MCF 10A (cell line): ENCODE measurements at regions of chr11 and their contacts with region 1.

Region 1: GRCh38 chr11:13261591-13262061 is 16.0 kb upstream of the BMAL1 start:
- DNase-seq: peak; percentile 94
- H3K4me3 Mint-ChIP-seq: peak overlapping the region; percentile 62
- H3K27ac Mint-ChIP-seq: peak overlapping the region; percentile 99
- H3K4me1 Mint-ChIP-seq: peaks cover 57% of the 10 kb centered on the region
- H3K27me3 Mint-ChIP-seq: no peaks in the 10 kb centered on the region
- CTCF ChIP-seq: no peak

Region 2: DNA sequence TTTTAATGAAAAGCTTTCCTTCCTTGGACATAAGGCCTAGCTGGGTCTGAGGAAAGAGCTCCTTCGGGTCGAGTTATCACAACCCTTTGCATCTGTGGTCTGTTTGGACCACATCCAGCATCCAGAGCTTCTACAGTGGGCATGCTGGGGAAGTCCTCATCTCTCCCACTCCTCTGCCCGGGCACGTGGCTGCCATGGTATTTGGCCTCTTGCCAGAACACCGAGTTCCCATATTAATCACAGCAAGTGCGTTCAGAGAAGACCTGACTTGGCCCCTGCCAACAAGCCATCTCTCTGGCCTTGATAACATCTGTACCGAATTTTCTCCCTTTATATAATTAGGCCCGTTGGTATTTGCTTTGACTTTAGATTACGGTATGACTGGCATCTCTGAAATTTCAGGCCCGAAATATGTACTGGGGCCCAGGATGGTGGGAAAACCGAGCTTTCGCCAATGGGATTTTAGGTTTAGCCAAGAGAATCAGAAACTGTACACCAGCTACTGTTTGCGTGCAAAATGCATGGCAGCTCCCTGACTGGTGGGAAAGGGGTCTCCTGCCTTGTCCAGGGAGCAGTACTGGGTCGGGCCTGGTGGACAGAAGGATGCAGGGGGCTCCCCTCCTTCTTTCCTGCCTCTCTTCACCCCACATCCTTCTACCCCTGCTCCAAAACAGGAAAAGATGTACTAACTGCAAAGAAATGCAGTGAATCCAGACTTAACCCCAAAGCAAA is 1061.2 kb before region 1 on chr11:
- CTCF ChIA-PET with region 1: no interaction called
- POLR2A ChIA-PET with region 1: no interaction called
- intact Hi-C with region 1: loop called (anchors 10 kb)
- DNase-seq: peak; percentile 65
- H3K4me3 Mint-ChIP-seq: no peak overlapping the region
- H3K27ac Mint-ChIP-seq: peak overlapping the region; percentile 72
- H3K4me1 Mint-ChIP-seq: peaks cover 14% of the 10 kb centered on the region
- H3K27me3 Mint-ChIP-seq: no peaks in the 10 kb centered on the region
- CTCF ChIP-seq: no peak

Region 3: DNA sequence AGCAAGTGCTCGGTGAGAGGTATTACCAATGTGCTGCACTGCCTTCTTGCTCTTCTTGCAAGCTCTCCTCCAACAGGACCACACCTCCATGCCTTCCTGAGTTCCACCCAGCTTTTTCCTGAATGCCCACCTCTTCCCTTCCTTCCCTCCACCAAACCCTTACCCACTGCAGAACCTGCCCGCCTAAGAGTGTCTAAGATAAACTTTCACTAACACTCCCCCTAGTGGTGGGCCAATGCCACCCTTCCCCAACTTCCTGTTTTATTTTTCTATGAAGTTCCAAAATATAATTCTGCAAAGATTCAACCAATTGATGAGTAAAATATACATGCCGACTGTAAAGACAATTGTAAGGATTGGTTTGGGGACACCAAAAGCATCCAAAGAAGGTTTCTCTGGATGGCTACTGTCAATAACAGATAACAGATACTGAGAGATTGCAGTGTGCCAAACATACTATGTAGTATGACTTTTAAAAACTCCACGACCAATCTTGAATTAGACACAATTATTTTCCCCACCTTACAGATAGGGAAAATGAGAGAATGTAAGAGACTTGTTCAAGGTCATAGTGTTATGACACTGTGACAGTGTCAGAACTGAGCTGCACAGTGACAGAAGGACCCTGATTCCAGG is 22.6 kb before region 1 on chr11:
- CTCF ChIA-PET with region 1: interaction called, 9 read pairs
- POLR2A ChIA-PET with region 1: interaction called, 17 read pairs
- intact Hi-C with region 1: no loop called
- DNase-seq: peak; percentile 72
- H3K4me3 Mint-ChIP-seq: no peak overlapping the region
- H3K27ac Mint-ChIP-seq: no peak overlapping the region
- H3K4me1 Mint-ChIP-seq: peaks cover 6% of the 10 kb centered on the region
- H3K27me3 Mint-ChIP-seq: no peaks in the 10 kb centered on the region
- CTCF ChIP-seq: peak; percentile 68

Region 4: DNA sequence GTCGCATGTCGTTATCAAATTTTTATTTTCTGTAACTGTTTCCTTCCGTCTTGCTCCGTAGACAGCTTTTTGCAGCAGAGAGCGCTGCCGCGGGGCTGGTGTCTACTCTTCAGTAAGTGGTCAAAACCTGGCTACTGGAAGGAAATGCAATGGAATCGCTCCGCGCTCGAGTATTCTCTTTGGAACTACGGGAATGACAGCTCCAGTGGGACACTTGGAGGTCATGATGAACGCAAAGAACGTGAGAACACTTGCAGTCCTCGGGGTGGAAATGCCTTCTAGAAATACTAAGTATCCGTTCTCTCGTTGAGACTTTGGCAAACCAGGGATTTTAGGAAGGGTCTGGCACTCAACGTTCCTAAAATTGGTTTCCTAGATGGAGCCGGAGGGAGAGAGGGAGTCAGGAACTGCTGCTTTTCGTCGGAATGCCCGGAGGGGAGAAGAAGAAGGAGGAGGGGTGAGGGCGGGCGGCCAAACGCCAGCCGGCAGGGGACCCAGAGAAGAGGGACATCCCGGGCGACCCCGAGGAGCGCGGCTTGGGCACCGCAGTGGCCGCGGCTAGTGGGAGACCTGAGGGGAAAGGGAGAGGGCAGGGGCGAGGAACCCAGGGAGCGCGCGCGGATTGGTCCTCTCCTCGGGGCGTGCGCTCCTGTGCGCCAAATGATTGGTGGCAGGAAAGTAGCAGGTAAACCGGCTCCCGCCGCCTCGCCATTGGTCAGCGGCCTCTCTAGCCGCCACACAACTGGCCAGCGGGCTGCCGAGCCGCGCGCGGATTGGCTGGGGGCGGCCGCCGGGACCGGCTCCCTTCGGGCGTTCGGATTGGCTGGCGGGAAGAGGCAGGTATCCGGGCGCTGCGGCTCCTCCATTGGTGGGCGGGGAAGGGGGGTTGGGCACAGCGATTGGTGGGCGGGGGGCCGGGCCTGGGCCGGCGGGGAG is 15.5 kb after region 1 on chr11:
- CTCF ChIA-PET with region 1: interaction called, 9 read pairs
- POLR2A ChIA-PET with region 1: interaction called, 134 read pairs
- intact Hi-C with region 1: loop called (anchors 1 kb)
- DNase-seq: peak; percentile 98
- H3K4me3 Mint-ChIP-seq: peak overlapping the region; percentile 91
- H3K27ac Mint-ChIP-seq: no peak overlapping the region
- H3K4me1 Mint-ChIP-seq: peaks cover 31% of the 10 kb centered on the region
- H3K27me3 Mint-ChIP-seq: no peaks in the 10 kb centered on the region
- CTCF ChIP-seq: no peak

Region 5: GRCh38 chr11:13335319-13335718 is 73.7 kb after region 1 on chr11:
- CTCF ChIA-PET with region 1: interaction called, 242 read pairs
- POLR2A ChIA-PET with region 1: interaction called, 204 read pairs
- intact Hi-C with region 1: loop called (anchors 2 kb)
- DNase-seq: peak; percentile 88
- H3K4me3 Mint-ChIP-seq: no peak overlapping the region
- H3K27ac Mint-ChIP-seq: peak overlapping the region; percentile 20
- H3K4me1 Mint-ChIP-seq: peaks cover 62% of the 10 kb centered on the region
- H3K27me3 Mint-ChIP-seq: no peaks in the 10 kb centered on the region
- CTCF ChIP-seq: peak; percentile 73